Naive thymus-derived CD4-positive, alpha-beta T cell (primary cell): ENCODE measurements at regions of chr18 and their contacts with region 1.

Region 1: DNA sequence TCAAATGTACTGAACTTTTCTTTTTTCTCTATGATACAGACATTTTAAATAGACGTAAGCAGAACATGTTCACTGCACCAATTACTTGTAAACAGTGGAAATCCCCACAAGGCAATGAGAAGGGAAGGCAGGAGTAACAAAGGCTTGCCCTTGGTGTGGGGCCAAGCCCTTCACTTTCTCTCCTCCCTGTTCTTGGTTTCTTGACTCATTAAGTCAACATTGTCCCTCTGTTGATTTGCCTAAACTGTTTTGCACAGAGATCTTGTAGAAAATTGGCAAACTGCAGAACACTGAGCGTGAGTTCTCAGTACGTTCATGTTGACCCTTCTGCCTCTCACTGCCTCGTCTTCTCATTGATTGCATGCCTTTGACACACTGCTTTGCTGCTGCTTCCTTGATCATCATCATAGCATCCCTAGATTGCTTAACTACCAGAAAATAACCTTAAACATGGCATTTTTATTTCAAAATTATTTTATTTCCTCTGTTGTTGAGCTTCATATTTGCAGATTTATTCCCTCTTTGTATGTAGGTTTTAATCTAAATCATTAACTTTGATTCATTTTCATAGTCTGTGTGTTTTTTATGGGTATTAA is 257.7 kb downstream of the PTGR3 start:
- DNase-seq: peak in 7 of 9 donors; percentile 18 to 65 (median 38)
- ATAC-seq: peak; percentile 93
- H3K4me3 ChIP-seq: no peak overlapping the region
- H3K4me3 Mint-ChIP-seq: peak overlapping the region in 9 of 10 donors; percentile 44 to 83 (median 68)
- H3K27ac ChIP-seq: no peak overlapping the region
- H3K27ac Mint-ChIP-seq: peak overlapping the region; percentile 39 to 93 (median 86)
- H3K4me1 ChIP-seq: peaks cover 0 to 19% of the 10 kb centered on the region in 2 donors
- H3K4me1 Mint-ChIP-seq: peaks cover 13 to 38% (median 32%) of the 10 kb centered on the region in 7 donors
- H3K27me3 ChIP-seq: no peaks in the 10 kb centered on the region
- H3K27me3 Mint-ChIP-seq: no peaks in the 10 kb centered on the region

Region 2: GRCh38 chr18:74916773-74917393 is 34.4 kb before region 1 on chr18:
- CTCF ChIA-PET with region 1: no interaction called
- POLR2A ChIA-PET with region 1: no interaction called
- intact Hi-C with region 1: no loop called
- DNase-seq: no peak
- ATAC-seq: no peak
- H3K4me3 ChIP-seq: no peak overlapping the region
- H3K4me3 Mint-ChIP-seq: no peak overlapping the region
- H3K27ac ChIP-seq: no peak overlapping the region
- H3K27ac Mint-ChIP-seq: no peak overlapping the region
- H3K4me1 ChIP-seq: no peaks in the 10 kb centered on the region
- H3K4me1 Mint-ChIP-seq: peaks cover 0 to 11% (median 0%) of the 10 kb centered on the region in 7 donors
- H3K27me3 ChIP-seq: no peaks in the 10 kb centered on the region
- H3K27me3 Mint-ChIP-seq: no peaks in the 10 kb centered on the region

Region 3: GRCh38 chr18:74963820-74964446 is 12.7 kb after region 1 on chr18:
- CTCF ChIA-PET with region 1: no interaction called
- POLR2A ChIA-PET with region 1: no interaction called
- intact Hi-C with region 1: no loop called
- DNase-seq: no peak
- ATAC-seq: peak; percentile 59
- H3K4me3 ChIP-seq: no peak overlapping the region
- H3K4me3 Mint-ChIP-seq: no peak overlapping the region
- H3K27ac ChIP-seq: no peak overlapping the region
- H3K27ac Mint-ChIP-seq: no peak overlapping the region
- H3K4me1 ChIP-seq: no peaks in the 10 kb centered on the region
- H3K4me1 Mint-ChIP-seq: peaks cover 0 to 8% (median 0%) of the 10 kb centered on the region in 7 donors
- H3K27me3 ChIP-seq: no peaks in the 10 kb centered on the region
- H3K27me3 Mint-ChIP-seq: no peaks in the 10 kb centered on the region

Region 4: GRCh38 chr18:74994502-74995419 is 43.5 kb after region 1 on chr18:
- CTCF ChIA-PET with region 1: no interaction called
- POLR2A ChIA-PET with region 1: interaction called, 3 read pairs
- intact Hi-C with region 1: loop called in 1 of 2 experiments (anchors 2 kb)
- DNase-seq: peak in 1 of 9 donors; percentile 24
- ATAC-seq: peak; percentile 72
- H3K4me3 ChIP-seq: peak overlapping the region; percentile 29
- H3K4me3 Mint-ChIP-seq: peak overlapping the region in 7 of 10 donors; percentile 1 to 79 (median 44)
- H3K27ac ChIP-seq: no peak overlapping the region
- H3K27ac Mint-ChIP-seq: peak overlapping the region in 8 of 9 donors; percentile 21 to 87 (median 69)
- H3K4me1 ChIP-seq: peaks cover 10 to 55% of the 10 kb centered on the region in 2 donors
- H3K4me1 Mint-ChIP-seq: peaks cover 27 to 54% (median 40%) of the 10 kb centered on the region in 7 donors
- H3K27me3 ChIP-seq: no peaks in the 10 kb centered on the region
- H3K27me3 Mint-ChIP-seq: no peaks in the 10 kb centered on the region